PC-9 (cell line): ENCODE measurements at regions of chr15 and their contacts with region 1.

Region 1: DNA sequence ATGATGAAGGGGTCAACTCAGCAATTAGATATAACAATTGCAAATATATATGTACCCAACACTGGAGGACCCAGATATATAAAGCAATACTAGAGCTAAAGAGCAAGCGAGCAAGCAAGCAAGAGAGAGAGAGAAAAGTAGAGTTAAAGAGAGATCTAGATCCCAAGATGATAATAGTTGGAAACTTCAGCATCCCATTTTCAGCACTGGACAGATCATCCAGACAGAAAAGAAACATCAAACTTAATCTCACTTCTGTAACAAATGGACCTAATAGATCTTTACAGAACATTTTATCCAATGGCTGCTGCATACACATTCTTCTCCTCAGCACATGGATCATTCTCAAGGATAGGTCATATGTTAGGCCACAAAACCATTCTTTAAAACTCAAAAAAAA is 23.2 kb downstream of the PEAK1 start:
- DNase-seq: no peak
- H3K4me3 ChIP-seq: no peak overlapping the region
- H3K27ac ChIP-seq: no peak overlapping the region
- H3K4me1 ChIP-seq: no peaks in the 10 kb centered on the region
- H3K27me3 ChIP-seq: no peaks in the 10 kb centered on the region
- CTCF ChIP-seq: no peak

Region 2: GRCh38 chr15:77329202-77329601 is 67.5 kb before region 1 on chr15:
- CTCF ChIA-PET with region 1: no interaction called
- POLR2A ChIA-PET with region 1: no interaction called
- intact Hi-C with region 1: loop called (anchors 2 kb)
- DNase-seq: no peak
- H3K4me3 ChIP-seq: no peak overlapping the region
- H3K27ac ChIP-seq: no peak overlapping the region
- H3K4me1 ChIP-seq: no peaks in the 10 kb centered on the region
- H3K27me3 ChIP-seq: no peaks in the 10 kb centered on the region
- CTCF ChIP-seq: no peak